PC-9 (cell line): ENCODE measurements at regions of chr13 and their contacts with region 1.

Region 1: GRCh38 chr13:46759846-46760245 is 37.1 kb downstream of the ESD start:
- DNase-seq: no peak
- H3K4me3 ChIP-seq: no peak overlapping the region
- H3K27ac ChIP-seq: no peak overlapping the region
- H3K4me1 ChIP-seq: peaks cover 7% of the 10 kb centered on the region; the same call in 1 of the 2 replicates
- H3K27me3 ChIP-seq: no peaks in the 10 kb centered on the region
- CTCF ChIP-seq: no peak

Region 2: DNA sequence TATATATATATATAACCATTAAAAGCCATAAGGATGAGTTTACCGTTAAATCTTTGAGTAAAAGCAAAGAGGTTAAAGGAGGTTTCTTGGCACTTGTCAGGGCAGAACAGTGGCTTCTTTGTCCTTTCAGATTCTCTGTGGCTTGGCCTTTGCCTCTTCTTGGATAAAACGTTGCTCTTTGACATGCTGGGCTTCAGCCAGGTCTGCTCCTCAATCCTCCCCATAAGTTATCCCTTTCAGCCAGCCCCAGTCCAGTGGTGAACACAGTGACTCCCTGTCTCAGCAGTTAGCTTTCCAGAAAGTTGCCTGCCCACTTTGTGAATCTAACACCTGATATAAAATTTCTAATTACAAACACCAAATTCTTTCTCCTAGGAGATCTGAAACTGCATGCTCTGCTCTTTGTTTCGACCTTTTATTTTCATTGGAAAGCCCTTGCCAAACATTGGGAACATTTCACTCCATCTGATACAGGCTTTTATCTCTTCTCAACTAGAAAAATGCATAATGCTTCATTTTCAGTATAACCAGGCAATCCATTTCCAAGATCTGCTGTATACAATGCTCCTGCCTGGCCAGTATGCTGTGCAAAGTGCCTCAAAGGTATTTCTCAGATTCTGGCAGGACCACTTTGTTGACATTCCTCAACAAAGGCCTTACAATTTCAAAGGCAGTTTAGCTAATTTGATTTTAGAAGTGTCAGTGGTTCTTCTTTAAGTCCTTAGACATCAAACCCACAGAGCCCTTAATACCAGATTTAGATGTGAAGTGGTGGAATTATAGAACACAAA is 1351.3 kb after region 1 on chr13:
- CTCF ChIA-PET with region 1: interaction called, 10 read pairs
- POLR2A ChIA-PET with region 1: no interaction called
- intact Hi-C with region 1: no loop called
- DNase-seq: no peak
- H3K4me3 ChIP-seq: no peak overlapping the region
- H3K27ac ChIP-seq: no peak overlapping the region
- H3K4me1 ChIP-seq: no peaks in the 10 kb centered on the region
- H3K27me3 ChIP-seq: no peaks in the 10 kb centered on the region
- CTCF ChIP-seq: no peak